Activated naive CD4-positive, alpha-beta T cell treated with anti-CD3 and anti-CD28 coated beads, Interleukin-2, amount 10 ng/mL, durations not matched to agents 7 days and 5 days (primary cell): ENCODE measurements at regions of chr21 and their contacts with region 1.

Region 1: DNA sequence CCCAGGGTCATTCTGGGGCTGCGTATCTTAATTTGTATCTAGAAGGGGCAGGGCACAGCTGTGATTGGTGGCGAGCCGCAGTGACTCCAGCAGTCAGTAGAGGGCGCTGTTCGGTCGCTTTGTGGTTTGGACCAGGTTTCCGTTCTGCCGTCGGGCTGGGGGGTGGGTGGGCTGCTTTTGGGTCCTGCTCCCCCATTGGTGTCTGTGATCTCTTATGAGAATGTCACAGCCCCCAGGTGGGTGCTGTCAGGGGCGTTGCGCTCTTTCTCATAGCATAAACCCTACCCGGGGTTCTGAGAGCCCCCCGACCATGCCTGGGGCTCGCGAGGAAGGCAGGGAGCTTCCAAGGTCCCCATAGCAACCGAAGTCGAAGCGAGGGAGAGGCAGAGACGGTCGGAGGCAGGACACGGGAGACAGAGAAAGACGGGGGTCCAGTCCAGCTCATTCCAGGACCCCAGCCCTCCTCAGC is 5.4 kb downstream of the TFF3 start:
- DNase-seq: peak; percentile 84
- H3K4me3 Mint-ChIP-seq: no peak overlapping the region
- H3K27ac Mint-ChIP-seq: no peak overlapping the region
- H3K4me1 Mint-ChIP-seq: peaks cover 11% of the 10 kb centered on the region
- H3K27me3 Mint-ChIP-seq: peaks cover 56% of the 10 kb centered on the region

Region 2: GRCh38 chr21:42117229-42117966 is 192.4 kb before region 1 on chr21:
- CTCF ChIA-PET with region 1: no interaction called
- DNase-seq: peak; percentile 84
- H3K4me3 Mint-ChIP-seq: no peak overlapping the region
- H3K27ac Mint-ChIP-seq: no peak overlapping the region
- H3K4me1 Mint-ChIP-seq: peaks cover 37% of the 10 kb centered on the region
- H3K27me3 Mint-ChIP-seq: peaks cover 89% of the 10 kb centered on the region

Region 3: GRCh38 chr21:42263591-42264131 is 46.1 kb before region 1 on chr21:
- CTCF ChIA-PET with region 1: interaction called, 10 read pairs
- DNase-seq: no peak
- H3K4me3 Mint-ChIP-seq: no peak overlapping the region
- H3K27ac Mint-ChIP-seq: no peak overlapping the region
- H3K4me1 Mint-ChIP-seq: peaks cover 24% of the 10 kb centered on the region
- H3K27me3 Mint-ChIP-seq: peaks cover under 1% of the 10 kb centered on the region

Region 4: GRCh38 chr21:42449296-42449927 is 139.6 kb after region 1 on chr21:
- CTCF ChIA-PET with region 1: interaction called, 19 read pairs
- DNase-seq: no peak
- H3K4me3 Mint-ChIP-seq: no peak overlapping the region
- H3K27ac Mint-ChIP-seq: peak overlapping the region; percentile 92
- H3K4me1 Mint-ChIP-seq: peaks cover 33% of the 10 kb centered on the region
- H3K27me3 Mint-ChIP-seq: peaks cover 8% of the 10 kb centered on the region